ENCODE measurements at regions of chr9 and their contacts with region 1.

Region 1: GRCh38 chr9:95167998-95168397 is 149.5 kb downstream of the FANCC start:
- DNase-seq: peak; percentile 71
- H3K4me3 Mint-ChIP-seq: no peak overlapping the region
- H3K27ac Mint-ChIP-seq: peak overlapping the region; percentile 19
- H3K4me1 Mint-ChIP-seq: peaks cover 28% of the 10 kb centered on the region
- H3K27me3 Mint-ChIP-seq: no peaks in the 10 kb centered on the region

Region 2: DNA sequence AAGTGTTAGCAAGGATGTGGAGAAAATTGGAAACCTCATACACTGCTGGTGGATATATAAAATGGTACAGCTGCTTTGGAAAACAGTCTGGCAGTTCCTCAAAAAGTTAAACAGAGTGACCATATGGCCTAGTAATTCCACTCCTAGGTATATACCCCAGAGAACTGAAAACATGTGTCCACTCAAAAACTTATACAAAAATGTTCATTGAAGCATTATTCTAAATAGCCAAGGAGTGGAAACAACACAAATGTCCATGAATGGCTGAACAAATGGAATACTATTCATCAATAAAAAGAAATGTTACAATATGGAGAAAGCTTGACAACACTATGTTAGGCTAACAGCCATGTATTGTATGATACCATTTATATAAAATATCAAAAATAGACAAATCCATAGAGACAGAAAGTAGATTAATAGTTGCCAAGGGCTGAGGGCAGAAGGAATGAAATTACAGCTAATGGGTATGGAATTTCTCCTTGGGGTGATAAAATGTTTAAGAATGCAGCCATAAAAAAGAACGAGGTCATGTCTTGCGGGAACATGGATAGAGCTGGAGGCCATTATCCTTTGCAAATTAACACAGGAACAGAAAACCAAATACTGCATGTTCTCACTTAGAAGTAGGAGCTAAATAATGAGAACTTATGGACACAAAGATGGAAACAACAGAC is 495.0 kb before region 1 on chr9:
- CTCF ChIA-PET with region 1: interaction called, 8 read pairs
- POLR2A ChIA-PET with region 1: interaction called, 3 read pairs
- intact Hi-C with region 1: loop called (anchors 5 kb)
- DNase-seq: no peak
- H3K4me3 Mint-ChIP-seq: no peak overlapping the region
- H3K27ac Mint-ChIP-seq: no peak overlapping the region
- H3K4me1 Mint-ChIP-seq: peaks cover 7% of the 10 kb centered on the region
- H3K27me3 Mint-ChIP-seq: peaks cover 5% of the 10 kb centered on the region

Region 3: GRCh38 chr9:94783102-94783664 is 384.8 kb before region 1 on chr9:
- CTCF ChIA-PET with region 1: interaction called, 10 read pairs
- POLR2A ChIA-PET with region 1: no interaction called
- intact Hi-C with region 1: no loop called
- DNase-seq: peak; percentile 53
- H3K4me3 Mint-ChIP-seq: no peak overlapping the region
- H3K27ac Mint-ChIP-seq: no peak overlapping the region
- H3K4me1 Mint-ChIP-seq: peaks cover 14% of the 10 kb centered on the region
- H3K27me3 Mint-ChIP-seq: no peaks in the 10 kb centered on the region

Region 4: GRCh38 chr9:94885854-94886447 is 282.0 kb before region 1 on chr9:
- CTCF ChIA-PET with region 1: no interaction called
- POLR2A ChIA-PET with region 1: no interaction called
- intact Hi-C with region 1: no loop called
- DNase-seq: no peak
- H3K4me3 Mint-ChIP-seq: no peak overlapping the region
- H3K27ac Mint-ChIP-seq: no peak overlapping the region
- H3K4me1 Mint-ChIP-seq: no peaks in the 10 kb centered on the region
- H3K27me3 Mint-ChIP-seq: no peaks in the 10 kb centered on the region

Region 5: DNA sequence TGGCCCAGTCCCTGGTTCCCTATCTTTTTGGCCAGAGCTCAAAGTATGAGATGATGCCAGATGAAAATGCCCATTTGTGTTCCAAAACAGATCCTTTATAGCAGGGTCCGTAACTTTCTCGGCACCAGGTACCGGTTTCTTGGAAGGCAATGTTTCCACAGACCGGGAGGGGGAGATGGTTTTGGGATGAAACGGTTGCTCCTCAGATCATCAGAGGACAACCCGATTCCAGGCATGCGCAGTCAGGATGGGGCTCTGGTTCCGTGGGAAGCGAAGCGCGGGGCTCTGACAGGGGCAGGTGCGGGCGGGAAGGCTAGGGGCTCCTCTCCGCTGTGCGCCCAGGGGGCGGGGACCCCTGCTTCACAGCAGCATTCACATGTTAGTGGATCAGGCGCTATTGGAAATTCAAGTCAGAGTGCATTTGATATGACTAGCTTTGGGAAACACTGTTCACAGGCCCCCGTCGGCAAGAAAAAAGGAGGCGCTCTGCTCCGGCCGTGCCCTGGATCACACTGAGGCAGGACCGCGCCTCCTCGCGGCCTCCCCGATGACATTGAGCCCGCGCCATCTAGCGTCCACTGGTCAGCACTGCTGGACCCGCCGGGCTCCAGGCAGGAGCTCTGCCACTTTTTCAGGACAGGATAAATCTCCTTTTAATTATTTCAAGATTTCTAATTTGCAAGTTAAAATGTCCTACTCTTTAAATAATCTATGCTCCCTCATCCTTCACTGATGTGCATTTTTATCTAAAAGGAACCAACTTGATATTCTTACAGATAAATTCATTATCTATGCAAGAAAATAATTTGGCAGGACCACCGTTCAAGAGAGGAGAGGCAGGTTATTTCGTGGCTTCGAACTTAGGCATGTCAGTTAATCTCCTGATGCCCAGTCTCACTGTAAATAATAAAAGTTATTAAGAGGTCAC is 40.5 kb before region 1 on chr9:
- CTCF ChIA-PET with region 1: interaction called, 51 read pairs
- POLR2A ChIA-PET with region 1: no interaction called
- intact Hi-C with region 1: no loop called
- DNase-seq: peak; percentile 84
- H3K4me3 Mint-ChIP-seq: no peak overlapping the region
- H3K27ac Mint-ChIP-seq: no peak overlapping the region
- H3K4me1 Mint-ChIP-seq: no peaks in the 10 kb centered on the region
- H3K27me3 Mint-ChIP-seq: no peaks in the 10 kb centered on the region

Region 6: DNA sequence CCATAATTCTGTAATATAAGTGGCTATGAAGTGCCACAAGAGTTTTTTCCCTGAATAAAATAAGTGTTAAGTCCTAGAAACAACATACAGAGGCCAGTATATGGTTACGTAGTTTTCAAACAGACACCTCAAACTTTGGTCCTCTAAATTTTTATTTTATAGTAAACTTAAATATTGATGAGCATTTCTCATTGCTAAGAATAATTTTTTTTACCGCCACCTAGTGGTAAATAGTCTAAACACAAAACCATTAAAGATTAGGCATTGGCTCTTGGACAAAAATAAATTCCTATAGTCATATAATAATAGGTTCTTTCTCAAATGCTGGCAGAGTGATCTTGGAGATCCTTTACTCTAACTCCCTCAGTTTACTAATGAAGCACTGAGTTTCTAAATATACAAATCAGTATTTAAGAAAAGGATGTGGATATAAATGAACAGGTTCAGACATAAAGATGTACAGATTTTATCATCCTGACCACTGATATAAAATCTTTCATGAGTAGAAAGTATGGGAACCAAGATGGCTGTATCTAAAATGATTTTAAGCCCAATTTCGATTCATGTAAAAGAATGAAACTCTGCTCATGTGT is 13.3 kb after region 1 on chr9:
- CTCF ChIA-PET with region 1: interaction called, 20 read pairs
- POLR2A ChIA-PET with region 1: no interaction called
- intact Hi-C with region 1: no loop called
- DNase-seq: no peak
- H3K4me3 Mint-ChIP-seq: no peak overlapping the region
- H3K27ac Mint-ChIP-seq: no peak overlapping the region
- H3K4me1 Mint-ChIP-seq: no peaks in the 10 kb centered on the region
- H3K27me3 Mint-ChIP-seq: no peaks in the 10 kb centered on the region

Measured in activated CD4-positive, alpha-beta memory T cell treated with anti-CD3 and anti-CD28 coated beads for 36 hours (primary cell).